ENCODE measurements at regions of chr18 and their contacts with region 1.

Region 1: GRCh38 chr18:70288851-70289328 is at the start of gene SOCS6:
- DNase-seq: peak; percentile 59 to 77
- ATAC-seq: peak; percentile 30 to 82 (median 64)
- H3K4me3 ChIP-seq: peak within 1 kb of the TSS; percentile 57 to 95 (median 73)
- H3K27ac ChIP-seq: peak within 1 kb of the TSS; percentile 82 to 94 (median 90)
- H3K4me1 ChIP-seq: peaks cover 5 to 68% (median 39%) of the 10 kb centered on the region in 9 donors
- H3K27me3 ChIP-seq: no peaks in the 10 kb centered on the region
- CTCF ChIP-seq: no peak
- total RNA-seq, gene SOCS6: 17.0 to 31.8 (median 21.2) TPM

Region 2: DNA sequence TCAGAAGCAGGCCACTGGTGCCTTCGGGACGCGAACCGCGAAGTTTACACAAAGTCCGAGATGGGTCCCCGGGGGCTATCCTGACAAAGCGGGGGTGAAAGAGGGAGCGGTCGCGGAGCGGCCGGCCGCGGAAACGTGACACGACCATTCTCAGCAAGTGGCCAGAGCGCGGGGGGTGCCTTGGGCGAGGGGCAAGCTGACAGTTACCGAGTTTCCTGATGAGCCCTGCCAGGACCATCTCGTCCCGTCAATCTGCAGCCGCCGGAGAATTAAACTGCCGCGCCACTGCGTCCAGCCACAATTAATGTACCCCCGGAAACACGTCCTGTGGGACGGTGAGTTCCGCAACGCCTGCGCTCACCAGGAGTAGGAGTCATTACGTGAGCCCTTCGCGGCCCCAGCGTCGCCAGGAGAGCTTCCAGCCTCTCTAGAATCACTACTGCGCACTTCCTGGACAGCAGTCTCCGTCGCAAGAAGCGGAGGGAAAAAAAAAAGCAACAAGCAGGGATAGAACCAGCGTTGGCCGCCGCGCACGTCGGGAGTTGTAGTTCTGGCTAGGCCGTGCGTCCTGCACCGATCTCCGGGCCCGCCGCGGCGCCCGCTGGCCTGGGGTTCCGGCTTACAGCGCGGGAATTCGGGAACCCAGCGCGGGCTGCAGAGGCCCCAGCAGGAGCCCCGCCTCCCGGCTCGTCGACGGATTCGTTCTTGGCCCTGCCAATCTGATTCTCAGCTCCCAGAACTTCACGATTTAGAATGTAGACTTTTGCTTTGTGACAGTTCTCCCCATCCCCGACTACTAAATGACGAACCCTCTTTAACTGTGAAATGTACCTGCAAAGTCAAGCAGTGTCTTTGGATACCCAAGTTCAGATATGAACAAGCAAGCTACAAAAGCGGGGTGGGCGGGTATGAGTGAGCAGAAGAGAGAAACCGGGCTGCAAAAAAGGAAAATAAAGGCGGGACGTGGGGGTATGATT is 83.2 kb before region 1 on chr18 and contains the start of gene RTTN:
- intact Hi-C with region 1: loop called in 9 of 10 experiments (anchors 1 to 10 kb)
- DNase-seq: peak; percentile 94 to 95
- ATAC-seq: peak; percentile 100
- H3K4me3 ChIP-seq: peak within 1 kb of the TSS; percentile 32 to 89 (median 74)
- H3K27ac ChIP-seq: peak within 1 kb of the TSS; percentile 91 to 99 (median 97)
- H3K4me1 ChIP-seq: peaks cover 0 to 22% (median 16%) of the 10 kb centered on the region in 9 donors
- H3K27me3 ChIP-seq: peaks cover 0 to 2% (median 0%) of the 10 kb centered on the region in 7 donors
- CTCF ChIP-seq: no peak
- total RNA-seq, gene RTTN: 6.5 to 15.7 (median 10.2) TPM